Activated CD4-positive, alpha-beta memory T cell treated with anti-CD3 and anti-CD28 coated beads for 36 hours (primary cell): ENCODE measurements at regions of chr17 and their contacts with region 1.

Region 1: DNA sequence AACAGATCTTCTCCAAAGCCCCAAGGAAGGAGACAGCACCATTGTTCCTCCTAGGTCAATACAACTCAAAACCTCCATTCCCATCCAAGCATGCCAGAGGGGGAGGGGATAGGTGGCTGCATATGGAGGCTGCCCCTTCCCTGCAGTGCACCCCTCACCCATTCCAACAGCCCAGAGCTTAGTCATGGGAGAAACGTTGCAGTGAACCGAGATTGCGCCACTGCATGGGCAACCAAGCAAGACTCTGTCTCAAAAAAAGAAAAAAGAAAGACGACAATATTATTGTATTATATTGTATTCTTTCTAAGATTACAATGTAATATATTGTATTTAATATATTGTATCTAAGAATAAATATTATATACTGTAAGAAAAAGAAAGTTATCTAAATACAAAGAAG is 36.4 kb upstream of the CD300E start:
- DNase-seq: no peak
- H3K4me3 Mint-ChIP-seq: no peak overlapping the region
- H3K27ac Mint-ChIP-seq: no peak overlapping the region
- H3K4me1 Mint-ChIP-seq: peaks cover 3% of the 10 kb centered on the region
- H3K27me3 Mint-ChIP-seq: peaks cover 28% of the 10 kb centered on the region

Region 2: DNA sequence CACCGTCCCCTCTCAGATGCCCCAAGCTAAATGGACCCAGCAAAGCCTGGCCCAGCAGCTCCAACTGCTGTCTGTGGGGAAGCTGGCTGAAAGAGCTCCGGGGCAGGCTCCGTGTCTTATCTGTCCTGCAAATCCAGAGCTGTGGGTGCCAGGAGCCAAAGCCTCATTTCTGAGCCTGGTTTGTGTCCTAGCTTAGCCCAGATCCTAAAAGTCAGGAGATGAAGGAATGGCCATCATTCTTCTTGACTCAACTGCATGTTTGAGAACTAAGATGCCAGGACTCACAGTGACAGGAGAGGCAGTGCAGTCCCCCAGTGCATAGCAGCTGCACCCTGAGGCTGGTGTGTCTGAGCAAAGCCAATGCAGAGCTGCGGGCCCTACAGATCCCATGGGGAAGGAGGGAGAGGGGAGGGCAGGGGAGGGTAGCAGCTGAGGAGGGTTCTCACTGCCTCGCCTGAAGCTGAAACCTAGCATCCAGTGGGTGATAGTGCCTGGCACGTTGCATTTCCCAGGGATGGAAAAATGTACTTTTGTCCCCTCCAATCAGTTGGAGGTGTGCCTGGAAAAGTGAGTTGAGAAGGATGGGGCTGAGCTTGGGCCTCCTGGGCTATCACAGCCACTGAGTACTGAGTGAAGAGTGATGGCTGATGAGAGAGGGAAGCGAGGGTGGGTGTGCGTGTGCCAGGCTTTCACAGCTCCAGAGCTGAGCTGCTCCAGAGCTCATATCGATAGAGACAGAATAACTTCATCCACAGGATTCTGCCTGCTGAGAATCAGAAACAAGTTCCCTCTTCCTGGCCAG is 11.8 kb before region 1 on chr17:
- CTCF ChIA-PET with region 1: interaction called, 21 read pairs
- POLR2A ChIA-PET with region 1: no interaction called
- intact Hi-C with region 1: no loop called
- DNase-seq: no peak
- H3K4me3 Mint-ChIP-seq: no peak overlapping the region
- H3K27ac Mint-ChIP-seq: no peak overlapping the region
- H3K4me1 Mint-ChIP-seq: no peaks in the 10 kb centered on the region
- H3K27me3 Mint-ChIP-seq: peaks cover 29% of the 10 kb centered on the region

Region 3: GRCh38 chr17:74677558-74678466 is 17.9 kb after region 1 on chr17:
- CTCF ChIA-PET with region 1: interaction called, 47 read pairs
- POLR2A ChIA-PET with region 1: no interaction called
- intact Hi-C with region 1: no loop called
- DNase-seq: no peak
- H3K4me3 Mint-ChIP-seq: no peak overlapping the region
- H3K27ac Mint-ChIP-seq: no peak overlapping the region
- H3K4me1 Mint-ChIP-seq: peaks cover 17% of the 10 kb centered on the region
- H3K27me3 Mint-ChIP-seq: peaks cover 17% of the 10 kb centered on the region

Region 4: GRCh38 chr17:74730491-74731346 is 70.8 kb after region 1 on chr17:
- CTCF ChIA-PET with region 1: interaction called, 223 read pairs
- POLR2A ChIA-PET with region 1: interaction called, 12 read pairs
- intact Hi-C with region 1: no loop called
- DNase-seq: peak; percentile 74
- H3K4me3 Mint-ChIP-seq: no peak overlapping the region
- H3K27ac Mint-ChIP-seq: no peak overlapping the region
- H3K4me1 Mint-ChIP-seq: peaks cover 13% of the 10 kb centered on the region
- H3K27me3 Mint-ChIP-seq: no peaks in the 10 kb centered on the region

Region 5: DNA sequence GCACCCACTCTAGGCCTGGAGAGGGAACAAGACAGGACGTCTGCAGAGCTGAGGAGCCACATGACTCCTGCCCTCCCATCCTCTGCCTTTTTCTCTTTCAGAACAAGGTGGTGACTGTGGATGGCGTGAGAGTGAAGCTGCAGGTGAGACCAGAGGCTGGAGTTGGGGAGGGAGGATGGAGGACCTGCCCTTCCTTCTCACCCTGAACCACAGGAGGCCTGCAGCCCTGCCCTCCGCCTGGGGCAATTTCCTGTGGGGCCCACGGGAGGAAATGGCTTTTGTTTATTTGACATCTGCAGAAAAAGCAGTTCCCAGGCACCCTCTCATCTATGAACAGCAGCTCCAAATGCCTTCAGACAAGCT is 82.2 kb after region 1 on chr17:
- CTCF ChIA-PET with region 1: interaction called, 223 read pairs
- POLR2A ChIA-PET with region 1: interaction called, 12 read pairs
- intact Hi-C with region 1: loop called (anchors 1 kb)
- DNase-seq: peak; percentile 79
- H3K4me3 Mint-ChIP-seq: peak overlapping the region; percentile 38
- H3K27ac Mint-ChIP-seq: peak overlapping the region; percentile 88
- H3K4me1 Mint-ChIP-seq: peaks cover 79% of the 10 kb centered on the region
- H3K27me3 Mint-ChIP-seq: no peaks in the 10 kb centered on the region

Region 6: GRCh38 chr17:74759243-74759801 is 99.4 kb after region 1 on chr17:
- CTCF ChIA-PET with region 1: interaction called, 35 read pairs
- POLR2A ChIA-PET with region 1: no interaction called
- intact Hi-C with region 1: no loop called
- DNase-seq: peak; percentile 73
- H3K4me3 Mint-ChIP-seq: peak overlapping the region; percentile 23
- H3K27ac Mint-ChIP-seq: peak overlapping the region; percentile 85
- H3K4me1 Mint-ChIP-seq: peaks cover 69% of the 10 kb centered on the region
- H3K27me3 Mint-ChIP-seq: no peaks in the 10 kb centered on the region

Region 7: DNA sequence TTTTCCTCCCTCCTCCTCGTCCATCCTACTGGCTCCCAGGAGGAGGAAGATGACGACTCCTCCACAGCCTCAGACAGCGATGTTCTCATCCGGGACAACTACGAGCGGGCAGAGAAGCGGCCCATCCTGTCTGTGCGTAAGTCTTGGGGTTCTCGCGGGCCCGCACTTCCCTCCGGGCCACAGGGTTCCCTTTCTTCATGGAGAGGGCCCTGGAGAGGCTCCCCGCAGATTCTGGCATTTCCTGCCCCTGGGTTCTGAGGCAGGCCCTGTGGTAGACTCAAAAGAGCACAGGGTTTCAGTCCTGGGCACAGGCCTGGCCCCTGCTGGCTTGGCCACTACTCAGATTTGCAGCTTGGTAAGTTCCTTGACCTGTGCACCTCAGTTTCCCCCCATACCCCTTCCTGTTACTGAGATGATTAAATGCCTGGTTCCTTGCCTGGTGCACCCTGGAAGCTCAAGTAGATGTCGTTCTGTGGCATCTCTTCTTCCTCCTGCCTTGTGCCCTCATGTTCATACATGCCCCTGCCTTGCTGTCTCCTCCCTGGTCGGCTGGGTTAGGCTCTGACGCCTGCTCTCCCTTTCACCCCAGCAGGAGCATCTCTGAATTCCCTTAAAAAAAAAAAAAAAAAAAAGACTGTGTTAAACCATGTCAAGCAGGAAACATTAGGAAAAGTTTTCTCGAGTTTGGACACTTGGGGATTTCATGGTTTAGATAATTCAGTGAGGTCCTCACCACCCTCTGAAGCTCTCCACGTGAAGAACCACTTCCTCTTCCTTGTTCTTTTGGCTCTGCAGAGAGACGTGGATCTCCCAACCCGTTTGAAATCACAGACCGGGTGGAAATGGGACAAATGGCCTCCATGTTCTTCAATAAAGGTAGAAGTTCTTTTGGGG is 130.5 kb after region 1 on chr17:
- CTCF ChIA-PET with region 1: interaction called, 19 read pairs
- POLR2A ChIA-PET with region 1: no interaction called
- intact Hi-C with region 1: no loop called
- DNase-seq: no peak
- H3K4me3 Mint-ChIP-seq: no peak overlapping the region
- H3K27ac Mint-ChIP-seq: peak overlapping the region; percentile 57
- H3K4me1 Mint-ChIP-seq: peaks cover 31% of the 10 kb centered on the region
- H3K27me3 Mint-ChIP-seq: no peaks in the 10 kb centered on the region